ENCODE measurements at regions of chr17 and their contacts with region 1.

Region 1: GRCh38 chr17:52106638-52107261 is 51.8 kb downstream of the CA10 start:
- DNase-seq: peak; percentile 48
- H3K4me3 ChIP-seq: no peak overlapping the region
- H3K27ac ChIP-seq: no peak overlapping the region
- H3K4me1 ChIP-seq: no peaks in the 10 kb centered on the region
- H3K27me3 ChIP-seq: no peaks in the 10 kb centered on the region
- CTCF ChIP-seq: peak; percentile 68

Region 2: DNA sequence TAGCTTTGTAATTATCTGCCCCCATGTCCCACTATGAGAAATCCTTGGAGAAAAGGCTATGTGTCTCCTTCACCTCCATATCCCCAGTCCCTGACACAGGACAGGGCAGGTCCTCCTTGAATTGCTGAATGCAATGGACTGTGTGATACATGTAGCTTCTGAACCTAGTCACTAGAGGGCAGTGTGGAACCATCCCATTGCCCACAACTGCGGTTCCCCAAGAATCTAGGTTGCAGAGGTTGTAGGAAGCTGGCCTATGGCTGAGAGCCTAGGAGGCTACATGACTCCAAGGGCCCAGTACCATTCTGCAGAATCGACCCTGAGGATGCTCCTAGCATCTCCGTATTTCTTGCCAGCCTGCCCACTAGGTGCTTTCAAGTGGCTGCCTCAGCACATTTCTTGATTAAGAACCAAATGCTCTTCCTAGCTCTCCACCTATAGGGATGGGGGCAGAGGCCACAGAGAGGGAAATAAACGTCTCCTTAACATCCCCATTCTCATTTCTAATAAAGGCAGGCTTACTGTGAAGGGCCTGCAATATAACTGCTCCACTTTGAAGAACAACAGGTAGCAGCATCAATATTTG is 342.3 kb before region 1 on chr17:
- intact Hi-C with region 1: loop called (anchors 2 kb)
- DNase-seq: peak; percentile 46
- H3K4me3 ChIP-seq: no peak overlapping the region
- H3K27ac ChIP-seq: no peak overlapping the region
- H3K4me1 ChIP-seq: no peaks in the 10 kb centered on the region
- H3K27me3 ChIP-seq: no peaks in the 10 kb centered on the region
- CTCF ChIP-seq: peak; percentile 66

Region 3: DNA sequence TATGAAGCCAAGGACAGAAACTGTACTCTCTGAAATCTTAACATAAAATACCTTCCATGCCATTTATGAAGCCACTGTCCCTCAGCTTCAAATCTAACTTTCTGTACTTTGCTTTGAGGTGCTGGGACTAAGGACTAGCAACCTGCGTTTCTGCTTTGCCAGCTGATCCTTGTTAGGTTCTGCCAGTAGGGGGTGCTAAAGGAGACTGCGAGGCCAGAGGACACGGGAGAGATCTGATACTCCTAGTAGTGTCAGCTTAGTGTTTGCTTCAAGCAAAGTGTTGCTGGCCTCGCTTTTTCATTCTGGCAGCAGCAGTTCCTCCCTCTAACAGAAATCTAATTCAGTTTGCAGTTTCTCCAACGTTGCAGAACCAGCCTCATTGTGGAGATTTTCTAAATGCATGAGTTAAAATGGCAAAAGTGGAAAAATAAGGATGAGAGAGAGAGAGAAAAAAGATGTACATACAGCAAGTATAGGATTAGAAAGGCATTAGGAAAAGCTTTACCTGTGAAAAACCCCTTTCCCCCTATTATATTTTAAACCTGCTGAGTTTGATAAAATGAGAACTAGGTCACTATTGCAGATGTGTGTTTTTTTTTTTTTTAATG is 245.7 kb before region 1 on chr17:
- intact Hi-C with region 1: loop called (anchors 5 kb)
- DNase-seq: peak; percentile 72
- H3K4me3 ChIP-seq: no peak overlapping the region
- H3K27ac ChIP-seq: no peak overlapping the region
- H3K4me1 ChIP-seq: no peaks in the 10 kb centered on the region
- H3K27me3 ChIP-seq: no peaks in the 10 kb centered on the region
- CTCF ChIP-seq: peak; percentile 59

Region 4: DNA sequence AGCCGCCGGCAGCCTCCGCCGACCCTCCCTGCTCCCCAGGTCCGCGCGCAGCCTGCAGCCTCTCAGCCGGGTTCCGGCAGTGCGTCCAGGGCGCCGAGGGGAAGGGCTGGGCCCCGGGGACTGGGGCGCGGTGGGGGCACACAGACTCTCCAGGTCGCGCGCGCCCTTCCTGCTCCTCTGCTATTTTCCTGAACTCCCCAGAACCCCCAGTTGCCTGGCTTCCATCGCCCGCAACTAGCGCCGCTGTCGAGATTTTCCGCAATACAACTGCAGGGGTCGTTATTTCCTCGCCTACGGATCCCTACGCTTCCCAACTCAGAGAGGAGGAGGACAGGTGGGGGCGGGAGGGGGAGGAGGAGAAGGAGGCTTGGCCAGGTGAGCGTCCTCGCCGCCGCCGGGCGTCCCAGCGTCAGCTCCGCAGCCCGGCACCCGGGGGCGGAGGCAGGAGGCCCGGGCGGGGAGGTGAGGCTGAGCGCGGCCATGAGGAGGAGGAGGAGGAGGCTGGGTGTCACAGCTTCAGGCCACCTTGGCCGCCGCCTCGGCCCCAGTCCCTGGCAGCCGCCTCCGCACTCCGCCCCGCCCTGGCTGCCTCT is 51.8 kb after region 1 on chr17 and contains the start of gene CA10:
- intact Hi-C with region 1: no loop called
- DNase-seq: no peak
- H3K4me3 ChIP-seq: no peak within 1 kb of the TSS
- H3K27ac ChIP-seq: no peak within 1 kb of the TSS
- H3K4me1 ChIP-seq: no peaks in the 10 kb centered on the region
- H3K27me3 ChIP-seq: peaks cover 25% of the 10 kb centered on the region
- CTCF ChIP-seq: no peak
- total RNA-seq, gene CA10: 0.27 to 0.52 TPM